ENCODE measurements at regions of chr9 and their contacts with region 1.

Region 1: DNA sequence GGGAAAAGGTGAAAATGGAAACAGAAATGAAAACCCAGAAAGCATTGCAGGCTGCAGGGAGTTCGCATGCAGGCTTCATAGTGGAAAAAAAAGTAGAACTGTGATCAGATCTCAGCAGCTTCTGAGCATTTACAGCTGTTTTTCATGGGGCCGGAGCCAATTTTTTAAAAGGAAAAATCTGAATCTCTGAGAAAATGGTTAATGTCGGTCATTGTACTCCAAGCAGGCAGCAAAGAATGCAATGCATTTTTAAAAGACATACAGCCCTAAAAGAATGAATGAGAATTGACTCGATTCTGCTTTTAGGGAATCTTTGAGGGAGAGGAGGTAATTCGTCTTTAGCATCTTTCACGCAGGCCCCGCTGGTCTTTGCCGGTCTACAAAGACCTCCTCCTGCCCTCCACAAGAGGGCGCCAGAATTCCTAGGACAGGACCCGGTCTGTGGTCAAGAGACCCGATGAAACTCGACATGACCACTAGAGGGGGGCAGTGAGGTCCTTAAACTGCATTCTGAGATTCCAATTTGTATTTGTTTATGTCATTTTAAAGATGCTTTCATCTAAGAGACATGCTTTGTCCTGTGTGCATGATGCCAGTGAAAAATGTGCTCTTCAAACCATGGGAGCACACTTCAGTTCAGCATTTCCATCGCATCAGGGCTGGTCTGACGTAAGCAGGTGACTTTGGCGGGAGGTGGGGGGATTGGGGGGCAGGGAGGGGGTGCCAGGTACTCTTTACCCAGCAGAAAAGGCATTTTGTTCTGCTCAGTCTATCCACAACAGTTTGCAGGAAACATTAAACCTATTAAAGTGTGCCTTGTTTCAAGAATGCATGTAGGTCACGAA is 43.7 kb upstream of the TMEM252 start:
- DNase-seq: peak; percentile 82
- ATAC-seq: peak; percentile 94
- H3K4me3 Mint-ChIP-seq: no peak overlapping the region
- H3K27ac Mint-ChIP-seq: no peak overlapping the region
- H3K4me1 Mint-ChIP-seq: peaks cover 2% of the 10 kb centered on the region
- H3K27me3 Mint-ChIP-seq: peaks cover 16% of the 10 kb centered on the region
- CTCF ChIP-seq: peak; percentile 84

Region 2: GRCh38 chr9:68999393-69000105 is 415.1 kb after region 1 on chr9:
- CTCF ChIA-PET with region 1: interaction called, 9 read pairs
- POLR2A ChIA-PET with region 1: no interaction called
- intact Hi-C with region 1: loop called (anchors 1 kb)
- DNase-seq: peak; percentile 76
- ATAC-seq: peak; percentile 90
- H3K4me3 Mint-ChIP-seq: no peak overlapping the region
- H3K27ac Mint-ChIP-seq: no peak overlapping the region
- H3K4me1 Mint-ChIP-seq: peaks cover 12% of the 10 kb centered on the region
- H3K27me3 Mint-ChIP-seq: peaks cover 3% of the 10 kb centered on the region
- CTCF ChIP-seq: peak; percentile 70